ENCODE measurements at regions of chr6 and their contacts with region 1.

Region 1: DNA sequence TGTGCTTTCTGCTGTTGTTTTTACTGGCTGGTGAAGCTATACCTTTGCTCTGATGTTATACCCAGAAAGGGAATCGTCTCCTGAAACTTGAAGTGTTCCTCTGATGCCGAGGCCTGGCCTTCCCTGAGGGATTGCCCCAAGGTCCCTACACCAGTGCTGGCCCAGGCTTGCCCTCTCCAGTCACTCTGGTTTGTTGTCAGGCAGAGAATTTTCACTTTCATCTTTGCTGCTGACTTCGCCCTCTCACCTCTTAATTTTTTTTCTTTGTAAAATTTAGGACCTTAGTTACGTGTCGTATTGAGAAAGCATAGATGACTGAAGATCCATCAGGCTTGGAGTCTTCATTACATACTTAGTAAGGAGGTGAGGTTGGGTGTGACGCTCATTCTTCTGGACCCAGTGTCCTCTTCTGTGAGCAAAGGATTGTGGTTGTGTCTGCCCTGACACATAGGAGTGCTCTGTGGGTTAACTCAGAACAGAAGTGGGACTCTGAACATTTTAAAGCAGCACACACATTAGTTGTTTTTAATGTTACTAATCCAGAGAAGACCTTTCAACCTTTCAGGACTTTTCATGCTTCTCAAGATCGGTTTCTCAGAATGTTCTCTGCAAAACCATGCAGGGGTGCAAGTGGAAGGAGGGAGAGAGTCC is 45.4 kb downstream of the TULP4 start:
- DNase-seq: peak; percentile 54
- H3K4me3 Mint-ChIP-seq: no peak overlapping the region
- H3K27ac Mint-ChIP-seq: peak overlapping the region; percentile 25
- H3K4me1 Mint-ChIP-seq: peaks cover 37% of the 10 kb centered on the region
- H3K27me3 Mint-ChIP-seq: no peaks in the 10 kb centered on the region

Region 2: DNA sequence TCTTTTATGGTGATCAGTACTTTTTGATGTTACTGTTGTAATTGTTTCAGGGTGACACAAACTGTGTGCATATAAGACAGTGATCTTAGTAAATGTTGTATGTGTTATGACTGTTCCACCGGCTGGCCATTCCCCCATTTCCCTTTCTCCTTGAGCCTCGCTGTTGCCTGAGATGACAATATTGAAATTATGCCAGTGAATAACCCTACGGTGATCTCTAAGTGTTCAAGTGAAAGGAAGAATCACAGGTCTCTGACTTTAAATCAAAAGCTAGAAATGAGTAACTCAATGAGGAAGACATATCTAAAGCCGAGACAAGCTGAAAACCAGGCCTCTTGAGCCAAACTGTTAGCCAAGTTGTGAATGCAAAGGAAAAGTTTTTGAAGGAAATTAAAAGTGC is 13.2 kb before region 1 on chr6:
- CTCF ChIA-PET with region 1: no interaction called
- POLR2A ChIA-PET with region 1: interaction called, 4 read pairs
- intact Hi-C with region 1: loop called (anchors 1 kb)
- DNase-seq: peak; percentile 66
- H3K4me3 Mint-ChIP-seq: no peak overlapping the region
- H3K27ac Mint-ChIP-seq: peak overlapping the region; percentile 9
- H3K4me1 Mint-ChIP-seq: peaks cover 22% of the 10 kb centered on the region
- H3K27me3 Mint-ChIP-seq: no peaks in the 10 kb centered on the region

Measured in activated CD4-positive, alpha-beta memory T cell treated with anti-CD3 and anti-CD28 coated beads for 36 hours (primary cell).